Activated CD4-positive, alpha-beta memory T cell treated with anti-CD3 and anti-CD28 coated beads for 36 hours (primary cell): ENCODE measurements at regions of chr20 and their contacts with region 1.

Region 1: DNA sequence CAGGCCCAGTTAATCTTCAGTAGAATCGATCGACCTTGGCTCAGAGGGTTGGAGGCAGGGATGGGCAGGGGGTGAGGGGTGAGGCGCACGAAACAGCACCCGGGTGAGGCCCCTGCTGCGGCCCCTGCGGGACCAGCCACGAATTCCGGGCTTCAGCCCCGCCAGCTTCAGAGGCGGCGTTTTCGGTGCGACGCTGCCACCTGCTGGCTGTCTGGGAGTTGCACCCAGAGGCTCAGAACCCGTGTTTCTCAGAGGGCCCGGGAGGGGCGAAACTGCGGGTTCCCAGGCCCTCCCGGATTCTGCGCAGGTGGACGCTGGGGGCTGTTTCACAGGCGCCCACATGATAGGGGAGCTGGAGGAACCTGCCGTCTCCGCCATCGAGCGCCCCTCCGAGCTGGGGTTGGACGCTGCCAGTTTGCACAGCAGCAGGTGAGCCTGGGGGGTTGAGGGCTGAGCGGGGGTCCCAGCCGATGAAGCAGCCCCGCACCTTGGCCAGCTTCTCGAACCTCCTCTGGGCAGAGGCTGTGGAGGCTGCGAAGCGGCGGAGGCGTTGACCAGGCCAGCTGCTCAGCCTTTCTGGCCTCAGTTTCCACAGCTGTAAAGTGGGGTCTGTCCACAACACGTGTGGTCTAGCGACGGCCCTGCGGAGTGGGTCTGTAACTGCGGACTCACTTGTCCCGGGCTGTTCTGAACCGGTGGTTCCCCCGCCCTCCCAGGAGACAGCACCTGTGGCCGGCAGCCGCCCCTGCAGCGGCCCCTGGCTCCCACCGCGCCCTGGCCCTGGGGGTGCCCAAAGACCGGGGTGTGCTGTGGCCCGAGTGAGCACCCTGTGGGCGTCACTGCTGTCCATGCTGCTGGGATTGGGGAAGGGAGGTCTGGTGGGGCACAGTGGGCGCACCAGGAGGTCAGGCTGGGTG is 2.5 kb upstream of the BHLHE23 start:
- DNase-seq: peak; percentile 88
- H3K4me3 Mint-ChIP-seq: peak overlapping the region; percentile 66
- H3K27ac Mint-ChIP-seq: peak overlapping the region; percentile 9
- H3K4me1 Mint-ChIP-seq: peaks cover 27% of the 10 kb centered on the region
- H3K27me3 Mint-ChIP-seq: peaks cover 49% of the 10 kb centered on the region

Region 2: DNA sequence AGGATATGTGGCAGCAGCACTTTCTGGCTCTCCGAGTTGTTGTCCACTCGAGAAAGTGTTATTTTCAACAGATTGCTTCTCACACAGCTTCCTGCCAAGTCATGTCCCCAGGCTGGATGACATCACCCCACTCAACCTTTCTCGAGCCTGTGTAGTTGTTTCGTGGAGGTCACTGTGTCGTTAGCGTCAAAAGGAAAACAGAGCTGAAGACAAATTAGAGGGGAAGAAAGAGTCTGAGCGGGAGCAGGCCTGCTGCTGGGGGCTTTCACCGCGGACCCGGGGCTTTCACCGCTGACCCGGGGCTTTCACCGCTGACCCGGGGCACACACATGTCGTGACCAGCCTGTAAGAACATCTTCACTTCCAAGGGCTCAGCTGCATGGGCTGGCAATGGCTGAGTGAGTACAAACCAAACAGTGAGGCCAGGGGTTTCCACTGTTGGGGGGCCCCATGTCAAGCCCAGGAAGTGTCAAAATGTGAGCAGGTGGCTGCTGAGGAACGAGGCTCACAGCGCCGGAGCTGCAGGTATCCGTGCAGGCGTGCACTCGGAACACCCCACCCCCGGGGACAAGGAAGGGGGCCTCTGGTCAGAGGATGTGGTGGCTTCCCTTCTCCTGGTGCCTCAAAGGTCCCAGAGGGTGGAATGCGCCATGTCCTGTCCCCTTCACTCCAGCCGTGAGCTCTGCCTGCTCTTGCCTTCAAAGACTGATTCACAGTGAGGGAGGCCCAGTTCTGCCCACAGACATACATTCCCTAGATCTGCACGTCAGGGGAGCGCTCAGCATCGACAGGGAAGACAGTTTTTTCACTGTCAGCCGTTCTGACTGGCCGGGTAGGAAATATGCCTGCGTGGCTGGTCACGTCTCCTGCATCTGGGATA is 1309.6 kb before region 1 on chr20:
- CTCF ChIA-PET with region 1: no interaction called
- POLR2A ChIA-PET with region 1: no interaction called
- intact Hi-C with region 1: no loop called
- DNase-seq: no peak
- H3K4me3 Mint-ChIP-seq: no peak overlapping the region
- H3K27ac Mint-ChIP-seq: no peak overlapping the region
- H3K4me1 Mint-ChIP-seq: no peaks in the 10 kb centered on the region
- H3K27me3 Mint-ChIP-seq: no peaks in the 10 kb centered on the region

Region 3: GRCh38 chr20:62822788-62823651 is 186.3 kb before region 1 on chr20:
- CTCF ChIA-PET with region 1: no interaction called
- POLR2A ChIA-PET with region 1: no interaction called
- intact Hi-C with region 1: loop called (anchors 5 kb)
- DNase-seq: peak; percentile 68
- H3K4me3 Mint-ChIP-seq: no peak overlapping the region
- H3K27ac Mint-ChIP-seq: no peak overlapping the region
- H3K4me1 Mint-ChIP-seq: no peaks in the 10 kb centered on the region
- H3K27me3 Mint-ChIP-seq: peaks cover 7% of the 10 kb centered on the region

Region 4: DNA sequence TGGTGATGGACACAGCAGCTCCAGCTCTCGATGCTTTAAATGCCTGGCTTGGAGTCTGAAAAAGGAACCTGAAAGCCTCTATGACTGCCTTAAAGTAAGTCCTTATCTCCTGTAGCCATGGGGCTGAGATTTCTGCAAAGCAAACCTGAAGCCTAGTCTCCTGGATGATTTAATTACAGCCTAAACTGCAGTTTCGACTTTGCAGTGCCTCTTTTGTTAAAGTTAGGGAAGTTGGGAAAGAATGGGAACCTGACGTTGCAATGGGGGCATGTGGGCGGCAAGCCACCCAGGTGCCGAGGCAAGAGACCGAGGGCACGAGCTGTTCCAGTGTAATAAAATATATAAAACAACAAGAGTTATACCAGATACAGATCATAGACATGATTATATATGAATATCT is 136.0 kb before region 1 on chr20:
- CTCF ChIA-PET with region 1: interaction called, 8 read pairs
- POLR2A ChIA-PET with region 1: no interaction called
- intact Hi-C with region 1: loop called (anchors 1 kb)
- DNase-seq: no peak
- H3K4me3 Mint-ChIP-seq: no peak overlapping the region
- H3K27ac Mint-ChIP-seq: no peak overlapping the region
- H3K4me1 Mint-ChIP-seq: peaks cover 12% of the 10 kb centered on the region
- H3K27me3 Mint-ChIP-seq: no peaks in the 10 kb centered on the region

Region 5: DNA sequence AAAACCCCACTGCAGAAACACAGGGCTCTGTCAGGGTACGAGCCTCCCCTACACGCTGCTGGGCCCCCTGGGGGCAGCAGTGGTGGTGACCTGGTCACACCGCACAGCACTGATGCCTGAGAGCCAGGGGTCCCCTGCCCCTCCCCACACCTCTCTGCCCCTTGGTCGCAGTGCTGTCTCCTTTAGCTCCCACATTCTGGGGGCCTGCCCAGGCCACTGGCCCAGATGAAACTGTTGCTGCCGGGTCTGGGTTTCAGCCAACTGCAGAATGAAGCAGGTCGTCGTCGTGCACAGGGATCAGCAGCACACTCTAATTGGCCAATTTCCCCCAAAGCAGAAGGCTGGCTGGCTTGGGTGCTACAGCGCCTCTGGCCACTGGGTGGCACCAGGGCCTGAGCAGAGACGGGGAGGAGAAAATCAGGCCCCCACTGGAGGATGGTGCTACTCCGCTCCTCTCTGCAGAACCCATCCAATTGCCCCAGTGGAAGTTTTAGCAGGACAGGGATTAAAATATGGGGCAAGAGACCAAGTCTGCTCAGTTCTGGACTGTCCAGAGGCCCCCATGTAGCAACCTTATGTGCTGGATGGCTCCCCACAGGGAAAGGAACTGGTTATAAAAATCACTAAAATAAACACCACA is 109.1 kb before region 1 on chr20:
- CTCF ChIA-PET with region 1: interaction called, 14 read pairs
- POLR2A ChIA-PET with region 1: no interaction called
- intact Hi-C with region 1: loop called (anchors 2 kb)
- DNase-seq: peak; percentile 83
- H3K4me3 Mint-ChIP-seq: peak overlapping the region; percentile 45
- H3K27ac Mint-ChIP-seq: peak overlapping the region; percentile 81
- H3K4me1 Mint-ChIP-seq: peaks cover 41% of the 10 kb centered on the region
- H3K27me3 Mint-ChIP-seq: no peaks in the 10 kb centered on the region

Region 6: GRCh38 chr20:62972270-62973032 is 36.9 kb before region 1 on chr20:
- CTCF ChIA-PET with region 1: interaction called, 27 read pairs
- POLR2A ChIA-PET with region 1: no interaction called
- intact Hi-C with region 1: loop called (anchors 1 kb)
- DNase-seq: peak; percentile 91
- H3K4me3 Mint-ChIP-seq: peak overlapping the region; percentile 38
- H3K27ac Mint-ChIP-seq: no peak overlapping the region
- H3K4me1 Mint-ChIP-seq: peaks cover 19% of the 10 kb centered on the region
- H3K27me3 Mint-ChIP-seq: peaks cover 44% of the 10 kb centered on the region

Region 7: DNA sequence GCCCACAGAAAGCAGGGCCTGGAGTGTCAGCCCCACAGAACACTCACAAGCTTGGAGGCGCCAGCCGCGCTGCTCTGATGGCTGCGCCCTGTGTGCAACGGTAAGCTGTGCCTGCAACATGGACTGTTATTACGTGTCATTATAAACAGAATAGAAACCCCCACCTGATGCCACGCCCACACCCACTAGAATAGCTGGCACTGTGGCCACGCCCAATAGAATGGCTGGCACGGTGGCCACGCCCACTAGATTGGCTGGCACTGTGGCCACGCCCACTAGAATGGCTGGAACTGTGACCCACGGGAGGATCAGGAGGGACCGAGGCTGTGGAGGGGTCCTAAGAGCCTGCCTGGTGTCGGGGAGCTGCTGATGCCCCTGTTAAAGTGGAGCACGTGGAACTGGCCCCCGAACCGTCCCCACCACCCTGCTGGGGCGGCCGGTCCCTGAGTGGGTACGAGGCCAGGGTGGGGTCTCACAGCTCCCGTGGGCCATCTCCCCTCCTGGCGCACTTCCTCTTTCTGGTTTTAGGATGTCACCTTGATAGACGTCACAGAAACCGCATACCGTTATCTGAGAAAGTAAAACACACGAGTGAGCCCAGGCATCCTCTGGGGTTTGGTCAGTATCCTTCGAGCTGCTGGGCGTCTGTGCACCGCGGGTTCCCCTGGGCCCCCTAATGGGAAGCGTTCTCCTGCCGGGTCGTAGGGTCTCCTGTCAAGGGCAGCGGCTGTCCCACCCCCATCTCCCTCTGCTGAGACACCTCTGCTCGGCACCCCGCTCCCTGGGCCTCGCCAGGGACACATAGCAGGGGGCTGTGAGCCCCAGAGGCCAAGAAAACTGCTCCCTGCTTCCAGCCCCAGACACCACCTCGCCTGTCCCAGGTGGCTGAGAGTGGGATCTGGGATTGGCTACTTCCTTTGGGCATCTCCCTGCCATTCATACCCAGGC is 31.4 kb before region 1 on chr20:
- CTCF ChIA-PET with region 1: interaction called, 27 read pairs
- POLR2A ChIA-PET with region 1: no interaction called
- intact Hi-C with region 1: no loop called
- DNase-seq: peak; percentile 88
- H3K4me3 Mint-ChIP-seq: peak overlapping the region; percentile 12
- H3K27ac Mint-ChIP-seq: no peak overlapping the region
- H3K4me1 Mint-ChIP-seq: peaks cover 40% of the 10 kb centered on the region
- H3K27me3 Mint-ChIP-seq: peaks cover 58% of the 10 kb centered on the region